ENCODE measurements at regions of chr14 and their contacts with region 1.

Region 1: GRCh38 chr14:39114073-39114838 is at the start of gene GEMIN2:
- DNase-seq: peak; percentile 96
- ATAC-seq: peak; percentile 99
- H3K4me3 ChIP-seq: peak within 1 kb of the TSS; percentile 68 to 85 (median 83)
- H3K4me3 Mint-ChIP-seq: peak within 1 kb of the TSS; percentile 93
- H3K27ac ChIP-seq: peak within 1 kb of the TSS; percentile 59 to 75
- H3K27ac Mint-ChIP-seq: peak within 1 kb of the TSS; percentile 92
- H3K4me1 ChIP-seq: peaks cover 13% of the 10 kb centered on the region in 2 donors
- H3K4me1 Mint-ChIP-seq: peaks cover 27% of the 10 kb centered on the region
- H3K27me3 ChIP-seq: no peaks in the 10 kb centered on the region
- H3K27me3 Mint-ChIP-seq: no peaks in the 10 kb centered on the region
- CTCF ChIP-seq: no peak
- total RNA-seq, gene GEMIN2: 13.4 and 18.2 TPM in 2 replicates

Region 2: GRCh38 chr14:39169541-39169900 is 55.3 kb after region 1 on chr14:
- CTCF ChIA-PET with region 1: interaction called, 4 read pairs
- POLR2A ChIA-PET with region 1: interaction called, 12 read pairs
- intact Hi-C with region 1: loop called (anchors 1 kb)
- DNase-seq: no peak
- ATAC-seq: no peak
- H3K4me3 ChIP-seq: peak overlapping the region; percentile 67 to 95 (median 81)
- H3K4me3 Mint-ChIP-seq: peak overlapping the region; percentile 95
- H3K27ac ChIP-seq: peak overlapping the region; percentile 87 to 92
- H3K27ac Mint-ChIP-seq: peak overlapping the region; percentile 99
- H3K4me1 ChIP-seq: peaks cover 19 to 29% of the 10 kb centered on the region in 2 donors
- H3K4me1 Mint-ChIP-seq: peaks cover 37% of the 10 kb centered on the region
- H3K27me3 ChIP-seq: no peaks in the 10 kb centered on the region
- H3K27me3 Mint-ChIP-seq: no peaks in the 10 kb centered on the region
- CTCF ChIP-seq: no peak

Region 3: GRCh38 chr14:39174560-39175444 is 60.5 kb after region 1 on chr14 and contains the start of gene PNN:
- CTCF ChIA-PET with region 1: interaction called, 4 read pairs
- POLR2A ChIA-PET with region 1: interaction called, 12 read pairs
- intact Hi-C with region 1: loop called (anchors 1 kb)
- DNase-seq: peak; percentile 99
- ATAC-seq: peak; percentile 82
- H3K4me3 ChIP-seq: peak within 1 kb of the TSS; percentile 80 to 97 (median 85)
- H3K4me3 Mint-ChIP-seq: peak within 1 kb of the TSS; percentile 97
- H3K27ac ChIP-seq: peak within 1 kb of the TSS; percentile 92 to 95
- H3K27ac Mint-ChIP-seq: peak within 1 kb of the TSS; percentile 99
- H3K4me1 ChIP-seq: peaks cover 15 to 24% of the 10 kb centered on the region in 2 donors
- H3K4me1 Mint-ChIP-seq: peaks cover 35% of the 10 kb centered on the region
- H3K27me3 ChIP-seq: no peaks in the 10 kb centered on the region
- H3K27me3 Mint-ChIP-seq: no peaks in the 10 kb centered on the region
- CTCF ChIP-seq: no peak
- total RNA-seq, gene PNN: 131 and 134 TPM in 2 replicates